SK-MEL-5 (cell line): ENCODE measurements at regions of chr20 and their contacts with region 1.

Region 1: DNA sequence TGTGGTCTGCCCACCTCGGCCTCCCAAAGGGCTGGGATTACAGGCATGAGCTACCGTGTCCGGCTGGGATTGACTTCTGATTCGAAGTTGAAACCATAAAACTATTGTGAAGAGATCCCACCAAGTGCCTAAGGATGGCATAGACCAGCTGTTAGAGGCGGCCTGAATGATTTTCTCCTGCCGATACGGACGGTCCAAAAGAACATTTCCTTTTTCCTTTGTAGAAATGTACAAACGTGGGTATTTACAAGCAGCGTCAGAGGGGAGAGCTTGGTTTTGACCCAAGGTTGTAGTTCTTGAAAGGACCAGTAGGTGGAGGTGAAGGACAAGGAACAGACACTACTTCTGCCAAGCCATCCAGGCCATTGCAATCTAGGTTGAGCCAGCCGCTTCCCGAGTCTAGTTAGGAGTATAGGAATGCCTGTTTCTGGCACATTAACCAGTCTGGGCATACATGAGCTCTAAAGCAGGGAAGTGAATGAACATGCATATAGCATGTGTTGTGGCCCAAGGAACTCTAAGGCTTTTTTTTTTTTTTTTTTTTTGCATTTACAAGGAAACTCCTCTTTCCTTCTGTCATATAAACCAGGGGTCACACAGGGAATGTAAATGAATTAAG is 29.1 kb downstream of the MOCS3 start:
- DNase-seq: peak; percentile 94

Region 2: DNA sequence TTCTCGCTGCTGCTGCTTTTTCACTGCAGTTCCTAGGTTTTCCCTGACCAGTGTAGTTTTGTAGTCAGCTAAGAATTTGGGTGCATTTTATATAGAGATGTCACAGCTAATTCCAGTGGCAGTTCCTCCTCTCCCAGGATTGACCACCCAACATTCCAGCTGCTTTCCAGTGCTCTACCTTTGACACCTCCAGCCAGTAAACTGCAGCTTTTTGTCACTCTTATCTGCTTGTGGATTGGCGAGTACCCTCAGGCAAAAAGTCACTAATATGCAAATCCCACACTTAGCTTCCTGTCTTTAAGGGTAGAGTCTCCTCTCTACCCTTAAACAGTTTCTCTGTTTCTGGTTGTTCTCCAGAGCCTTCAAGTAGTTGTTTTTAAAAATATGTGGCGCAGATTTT is 182.1 kb after region 1 on chr20:
- in situ Hi-C with region 1: no loop called
- DNase-seq: no peak

Region 3: GRCh38 chr20:51306503-51307358 is 319.0 kb after region 1 on chr20:
- in situ Hi-C with region 1: loop called (anchors 25 kb)
- DNase-seq: peak; percentile 79